Dorsolateral prefrontal cortex (tissue), 120 donors: ENCODE measurements at regions of chr11 and their contacts with region 1.

Region 1: DNA sequence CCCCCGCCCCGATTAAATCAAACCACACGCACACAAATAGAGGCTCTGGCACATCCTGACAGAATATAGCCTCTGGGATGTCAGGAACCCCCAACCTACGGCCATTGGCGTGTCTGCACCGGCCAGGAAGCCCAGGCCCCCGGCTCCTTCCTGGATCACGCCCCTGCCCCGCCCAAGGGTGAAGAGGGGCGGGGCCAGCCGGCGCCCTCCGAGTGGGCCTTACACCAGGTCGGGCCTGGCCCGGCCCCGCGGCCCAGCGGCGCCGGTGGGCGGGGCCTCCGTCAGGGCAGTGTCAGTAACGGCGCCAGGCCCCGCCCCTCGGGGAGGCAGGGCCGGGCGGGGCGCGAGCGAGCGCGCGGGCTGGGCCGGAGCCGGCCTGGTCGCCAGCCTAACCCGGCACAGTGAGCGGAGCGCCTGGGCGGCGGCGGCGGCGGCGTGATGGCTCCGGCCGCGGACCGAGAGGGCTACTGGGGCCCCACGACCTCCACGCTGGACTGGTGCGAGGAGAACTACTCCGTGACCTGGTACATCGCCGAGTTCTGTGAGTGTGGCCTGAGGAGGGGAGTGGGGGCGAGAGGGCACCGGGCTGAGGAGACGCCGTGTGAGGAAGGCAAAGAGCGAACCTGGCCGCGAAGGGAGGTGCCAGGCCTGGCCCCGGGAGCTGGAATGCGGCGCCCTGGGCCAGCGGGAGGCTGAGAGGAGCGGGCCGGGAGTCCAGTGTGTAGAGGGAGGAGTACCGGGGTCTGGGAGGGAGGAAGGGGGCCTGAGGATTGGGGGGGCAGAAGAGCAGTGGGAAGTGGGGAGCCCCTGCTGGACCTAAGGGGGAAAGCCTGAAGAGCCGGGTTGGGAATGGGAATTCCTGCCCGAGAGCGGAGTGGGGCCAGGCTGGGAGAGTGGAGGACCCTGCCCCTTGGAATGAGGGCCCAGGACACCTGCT is at the start of gene ACER3:
- DNase-seq: peak; percentile 77 to 92 (median 86)
- H3K4me3 ChIP-seq: peak within 1 kb of the TSS; percentile 59 to 97 (median 88)
- H3K27ac ChIP-seq: peak within 1 kb of the TSS in 58 of 59 donors; percentile 50 to 94 (median 88)
- H3K27me3 ChIP-seq: no peaks in the 10 kb centered on the region
- CTCF ChIP-seq: peak in 7 of 56 donors; percentile 5 to 18 (median 12)
- total RNA-seq, gene ACER3: 24.6 to 97.5 (median 41.3) TPM

Region 2: DNA sequence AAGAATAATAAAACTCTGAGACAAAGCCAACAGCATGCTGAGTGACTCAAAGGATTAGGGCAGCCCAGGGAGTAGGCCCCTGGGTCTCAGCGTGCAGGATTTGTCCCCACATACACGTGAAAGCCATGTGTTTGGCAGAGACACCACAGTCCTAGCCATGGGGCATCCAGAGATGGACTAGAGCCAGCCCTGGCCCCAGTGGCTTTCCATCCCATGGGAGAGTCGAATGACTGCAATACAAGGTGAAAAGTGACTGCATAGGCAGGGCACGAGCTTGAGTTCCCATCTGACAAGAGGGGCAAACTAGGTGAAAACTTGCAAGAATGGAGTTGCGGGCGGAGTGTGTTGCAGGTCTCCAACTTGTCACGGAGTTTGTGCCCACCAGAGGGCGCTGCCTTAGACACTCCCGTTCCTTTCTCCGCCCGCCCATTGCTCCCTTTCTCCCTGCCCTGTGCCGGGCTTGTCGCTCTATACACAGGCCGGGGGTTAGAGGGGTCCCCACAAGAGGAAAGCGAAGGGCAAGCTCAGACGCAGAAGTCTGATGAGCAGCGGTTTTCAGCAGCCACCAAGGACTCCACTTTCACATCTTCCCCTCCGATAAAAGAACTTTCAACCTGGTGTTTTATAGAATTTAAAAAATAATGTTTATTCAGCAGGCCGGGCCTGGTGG is 53.5 kb before region 1 on chr11:
- intact Hi-C with region 1: loop called (anchors 5 kb)
- DNase-seq: peak; percentile 79 to 89 (median 86)
- H3K4me3 ChIP-seq: peak overlapping the region in 30 of 59 donors; percentile 1 to 48 (median 26)
- H3K27ac ChIP-seq: peak overlapping the region in 5 of 59 donors; percentile 24 to 57 (median 29)
- H3K27me3 ChIP-seq: peaks cover 0 to 5% (median 0%) of the 10 kb centered on the region in 45 donors
- CTCF ChIP-seq: peak; percentile 69 to 96 (median 87)